ENCODE measurements at regions of chr10 and their contacts with region 1.

Region 1: DNA sequence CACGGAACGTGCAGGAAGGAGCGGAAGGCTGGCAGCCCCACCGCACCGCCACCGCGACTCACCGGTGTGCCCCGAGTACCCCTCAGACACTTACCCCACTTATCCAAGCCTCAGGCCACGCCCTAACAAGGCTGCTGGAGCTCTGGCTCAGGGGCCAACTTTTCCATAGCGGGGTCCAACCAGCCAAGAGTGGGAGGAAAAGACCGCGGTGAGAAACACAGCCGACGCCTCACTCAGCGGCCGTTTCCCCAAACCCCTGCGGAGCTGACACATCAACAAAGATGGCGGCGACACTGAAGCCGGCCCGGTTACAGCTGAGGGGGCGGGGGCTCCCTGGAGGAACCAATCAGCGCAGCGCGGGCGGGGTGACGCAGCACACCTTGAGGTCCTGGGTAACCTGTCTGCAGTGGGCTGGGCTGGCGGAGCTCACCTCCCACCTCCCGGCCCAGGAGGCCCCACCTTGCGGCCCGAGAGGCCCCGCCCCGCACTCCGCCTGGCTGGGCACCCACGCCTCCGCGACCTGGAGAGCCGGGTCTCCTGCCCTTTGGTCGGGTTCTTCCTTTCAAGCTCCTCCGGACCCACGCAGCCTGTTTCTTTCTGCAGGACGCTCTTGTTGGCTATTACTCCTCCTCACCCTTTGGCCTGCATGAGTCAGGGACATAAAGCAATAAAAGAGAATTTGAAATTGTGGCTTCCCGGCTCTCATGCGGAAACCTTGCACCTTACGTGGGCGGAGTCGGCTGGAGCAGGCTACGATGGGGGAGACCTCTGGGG is at the start of gene CCDC186:
- DNase-seq: peak; percentile 85 to 97
- H3K4me3 ChIP-seq: peak within 1 kb of the TSS; percentile 87 to 96
- H3K27ac ChIP-seq: peak within 1 kb of the TSS; percentile 93 to 94
- H3K4me1 ChIP-seq: peaks cover 0 to 5% of the 10 kb centered on the region in 2 donors
- H3K27me3 ChIP-seq: no peaks in the 10 kb centered on the region
- CTCF ChIP-seq: no peak
- total RNA-seq, gene CCDC186: 4.4 TPM

Region 2: DNA sequence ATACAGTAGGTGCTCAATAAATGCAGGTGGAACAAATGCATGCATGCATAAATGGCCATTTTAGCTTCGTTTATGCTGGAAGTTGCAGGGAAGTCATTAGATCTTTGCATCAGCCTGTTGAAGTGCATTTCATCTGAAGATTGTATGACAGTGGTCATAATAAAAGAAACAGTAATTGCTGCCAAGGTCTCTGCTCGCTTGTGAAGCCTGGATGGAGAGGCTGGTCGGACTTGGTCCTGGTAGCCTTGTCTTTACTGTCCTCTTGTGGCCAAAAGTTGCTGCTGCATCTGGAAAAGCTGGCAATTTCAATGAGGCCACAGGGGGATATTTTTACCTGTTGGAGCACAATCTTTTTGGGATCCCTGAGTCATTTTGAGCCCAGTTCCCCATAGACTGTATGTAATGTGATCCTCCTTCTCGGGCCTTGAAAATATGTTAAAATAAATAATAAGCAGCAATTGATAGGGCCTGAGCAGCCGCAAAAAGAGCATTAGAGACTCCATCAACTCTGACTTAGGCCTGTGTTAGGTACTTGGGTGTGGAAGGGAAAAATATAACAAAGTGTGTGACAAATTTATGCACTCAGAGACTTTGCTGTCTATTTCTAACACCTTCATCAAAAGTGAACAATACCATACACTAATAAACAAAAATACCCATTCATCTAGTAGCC is 652.8 kb before region 1 on chr10:
- intact Hi-C with region 1: no loop called
- DNase-seq: peak in 1 of 2 donors; percentile 85
- H3K4me3 ChIP-seq: no peak overlapping the region
- H3K27ac ChIP-seq: no peak overlapping the region
- H3K4me1 ChIP-seq: peaks cover 0 to 20% of the 10 kb centered on the region in 2 donors
- H3K27me3 ChIP-seq: no peaks in the 10 kb centered on the region
- CTCF ChIP-seq: peak; percentile 96 to 99 (median 97)

Region 3: GRCh38 chr10:114271779-114272167 is 97.7 kb after region 1 on chr10:
- intact Hi-C with region 1: loop called (anchors 1 kb)
- DNase-seq: peak; percentile 12 to 78
- H3K4me3 ChIP-seq: no peak overlapping the region
- H3K27ac ChIP-seq: peak overlapping the region in 1 of 2 donors; percentile 13
- H3K4me1 ChIP-seq: peaks cover 0 to 9% of the 10 kb centered on the region in 2 donors
- H3K27me3 ChIP-seq: no peaks in the 10 kb centered on the region
- CTCF ChIP-seq: no peak

Measured in ascending aorta (tissue), 2 donors.